Panc1 (cell line): ENCODE measurements at regions of chr18 and their contacts with region 1.

Region 1: DNA sequence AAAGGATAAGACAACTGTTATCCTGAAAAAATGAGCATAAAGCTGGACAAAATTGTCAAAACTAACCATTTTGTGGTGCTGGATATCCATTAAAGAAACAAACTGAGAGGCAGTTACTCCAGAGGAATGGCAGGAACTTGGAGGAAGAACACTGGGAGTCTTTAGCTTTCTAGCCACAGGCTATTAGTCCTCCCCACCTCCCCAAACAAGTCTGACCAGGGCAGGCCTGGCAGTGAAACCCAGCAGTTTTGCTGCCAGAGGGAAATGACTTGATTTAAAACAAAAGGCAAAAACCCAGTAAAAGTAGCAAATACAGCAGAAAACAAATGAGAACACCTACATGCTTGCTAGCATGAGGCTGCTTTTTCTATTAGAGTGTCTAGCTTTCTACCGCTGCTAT is 34.9 kb downstream of the OSBPL1A start:
- DNase-seq: no peak
- ATAC-seq: no peak
- H3K4me3 ChIP-seq: no peak overlapping the region
- H3K27ac ChIP-seq: no peak overlapping the region
- H3K4me1 ChIP-seq: no peaks in the 10 kb centered on the region
- H3K27me3 ChIP-seq: no peaks in the 10 kb centered on the region
- CTCF ChIP-seq: no peak

Region 2: GRCh38 chr18:22459491-22459890 is 1903.3 kb before region 1 on chr18:
- CTCF ChIA-PET with region 1: no interaction called
- POLR2A ChIA-PET with region 1: no interaction called
- in situ Hi-C with region 1: no loop called
- intact Hi-C with region 1: no loop called
- DNase-seq: no peak
- ATAC-seq: no peak
- H3K4me3 ChIP-seq: no peak overlapping the region
- H3K27ac ChIP-seq: no peak overlapping the region
- H3K4me1 ChIP-seq: no peaks in the 10 kb centered on the region
- H3K27me3 ChIP-seq: 0 out of 2 replicates have a peak, but pooled peaks cover 2% of the 10 kb centered on the region
- CTCF ChIP-seq: no peak

Region 3: GRCh38 chr18:24176727-24177416 is 185.9 kb before region 1 on chr18:
- CTCF ChIA-PET with region 1: no interaction called
- POLR2A ChIA-PET with region 1: no interaction called
- in situ Hi-C with region 1: no loop called
- intact Hi-C with region 1: loop called (anchors 5 kb)
- DNase-seq: no peak
- ATAC-seq: peak; percentile 69; the same call in 1 of the 2 replicates
- H3K4me3 ChIP-seq: no peak overlapping the region
- H3K27ac ChIP-seq: no peak overlapping the region
- H3K4me1 ChIP-seq: no peaks in the 10 kb centered on the region
- H3K27me3 ChIP-seq: no peaks in the 10 kb centered on the region
- CTCF ChIP-seq: peak; percentile 90

Region 4: GRCh38 chr18:24388957-24389356 is 26.2 kb after region 1 on chr18:
- CTCF ChIA-PET with region 1: no interaction called
- POLR2A ChIA-PET with region 1: interaction called, 12 read pairs
- in situ Hi-C with region 1: no loop called
- intact Hi-C with region 1: no loop called
- DNase-seq: no peak
- ATAC-seq: no peak
- H3K4me3 ChIP-seq: no peak overlapping the region
- H3K27ac ChIP-seq: no peak overlapping the region
- H3K4me1 ChIP-seq: no peaks in the 10 kb centered on the region
- H3K27me3 ChIP-seq: no peaks in the 10 kb centered on the region
- CTCF ChIP-seq: no peak

Region 5: GRCh38 chr18:24414349-24415003 is 51.7 kb after region 1 on chr18:
- CTCF ChIA-PET with region 1: no interaction called
- POLR2A ChIA-PET with region 1: interaction called, 11 read pairs
- in situ Hi-C with region 1: no loop called
- intact Hi-C with region 1: no loop called
- DNase-seq: no peak
- ATAC-seq: no peak
- H3K4me3 ChIP-seq: no peak overlapping the region
- H3K27ac ChIP-seq: no peak overlapping the region
- H3K4me1 ChIP-seq: no peaks in the 10 kb centered on the region
- H3K27me3 ChIP-seq: no peaks in the 10 kb centered on the region; the same call in 1 of the 2 replicates
- CTCF ChIP-seq: no peak

Region 6: DNA sequence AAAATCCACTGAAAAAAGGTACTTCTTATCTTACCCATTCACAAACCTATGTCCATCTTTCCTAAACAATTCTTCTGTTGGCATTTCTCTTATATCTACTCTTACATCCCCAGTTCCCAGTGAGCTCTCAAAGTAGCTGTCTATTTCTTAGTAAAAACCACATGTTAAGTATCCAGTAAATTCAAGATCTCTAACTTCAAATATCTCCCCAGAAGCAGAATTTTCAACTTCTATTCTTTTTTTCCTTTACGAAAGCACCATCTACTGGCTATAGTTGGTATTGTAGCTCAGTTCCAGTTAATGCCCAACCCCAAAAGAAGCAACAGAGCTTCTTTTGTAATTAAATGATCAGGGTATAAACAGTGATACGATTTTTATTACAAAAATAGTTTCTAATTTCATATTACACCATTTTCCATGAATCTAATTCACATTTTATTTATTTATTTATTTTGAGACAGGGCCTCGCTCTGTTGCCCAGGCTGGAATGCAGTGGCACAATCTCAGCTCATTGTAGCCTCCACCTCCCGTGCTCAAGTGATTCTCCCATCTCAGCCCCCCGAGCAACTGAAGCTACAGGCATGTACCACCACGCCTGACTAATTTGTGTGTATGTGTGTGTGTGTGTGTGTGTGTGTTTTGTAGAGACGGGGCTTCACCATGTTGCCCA is 126.2 kb after region 1 on chr18:
- CTCF ChIA-PET with region 1: interaction called, 13 read pairs
- POLR2A ChIA-PET with region 1: no interaction called
- in situ Hi-C with region 1: no loop called
- intact Hi-C with region 1: no loop called
- DNase-seq: peak; percentile 22
- ATAC-seq: peak; percentile 47; the same call in 1 of the 2 replicates
- H3K4me3 ChIP-seq: no peak overlapping the region
- H3K27ac ChIP-seq: no peak overlapping the region
- H3K4me1 ChIP-seq: no peaks in the 10 kb centered on the region
- H3K27me3 ChIP-seq: peaks cover 5% of the 10 kb centered on the region; the same call in 1 of the 2 replicates
- CTCF ChIP-seq: peak; percentile 82